ENCODE measurements at regions of chr7 and their contacts with region 1.

Region 1: DNA sequence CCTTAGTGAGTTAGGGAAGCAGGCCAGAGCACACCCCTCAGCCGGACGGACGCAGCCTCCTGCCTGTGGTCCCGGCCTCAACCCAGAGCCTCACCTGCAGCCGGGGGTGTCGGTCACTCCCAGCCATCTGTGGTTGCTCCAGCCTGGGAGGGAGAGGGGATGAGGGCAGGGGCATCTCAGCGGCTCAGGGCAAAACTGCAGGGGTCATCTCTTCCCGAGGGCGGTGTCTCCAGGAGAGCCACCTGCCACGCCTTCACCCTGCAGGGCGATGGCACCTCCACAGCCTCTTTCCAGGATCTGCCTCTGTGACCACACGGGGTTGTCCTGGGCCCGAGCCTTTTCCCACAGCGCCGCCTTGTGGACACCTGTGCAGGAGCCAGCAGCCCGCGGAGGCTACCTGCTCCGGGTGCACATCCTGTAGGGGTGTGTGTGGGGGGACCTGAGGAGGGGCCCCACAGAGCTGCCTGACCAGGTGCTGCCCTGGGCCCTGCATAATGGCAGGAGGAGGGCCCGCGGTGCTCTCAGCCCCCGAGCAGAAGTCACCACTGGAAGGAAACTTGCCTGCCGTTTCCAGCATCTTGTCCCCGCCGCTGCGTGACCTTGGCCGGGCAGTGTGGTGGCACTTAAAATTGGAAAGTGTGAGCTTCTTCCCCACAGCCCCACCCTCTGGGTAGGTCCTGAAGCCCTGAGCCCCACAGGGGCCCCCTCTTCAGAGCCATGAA is 21.6 kb upstream of the AP5Z1 start:
- DNase-seq: peak; percentile 73
- H3K4me3 Mint-ChIP-seq: no peak overlapping the region
- H3K27ac Mint-ChIP-seq: no peak overlapping the region
- H3K4me1 Mint-ChIP-seq: no peaks in the 10 kb centered on the region
- H3K27me3 Mint-ChIP-seq: no peaks in the 10 kb centered on the region
- CTCF ChIP-seq: peak; percentile 95

Region 2: GRCh38 chr7:4610768-4611467 is 143.0 kb before region 1 on chr7:
- CTCF ChIA-PET with region 1: interaction called, 5 read pairs
- POLR2A ChIA-PET with region 1: no interaction called
- intact Hi-C with region 1: loop called (anchors 1 kb)
- DNase-seq: peak; percentile 78
- H3K4me3 Mint-ChIP-seq: no peak overlapping the region
- H3K27ac Mint-ChIP-seq: no peak overlapping the region
- H3K4me1 Mint-ChIP-seq: peaks cover 6% of the 10 kb centered on the region
- H3K27me3 Mint-ChIP-seq: no peaks in the 10 kb centered on the region
- CTCF ChIP-seq: peak; percentile 81

Region 3: GRCh38 chr7:4621401-4622145 is 132.3 kb before region 1 on chr7:
- CTCF ChIA-PET with region 1: no interaction called
- POLR2A ChIA-PET with region 1: no interaction called
- intact Hi-C with region 1: no loop called
- DNase-seq: no peak
- H3K4me3 Mint-ChIP-seq: no peak overlapping the region
- H3K27ac Mint-ChIP-seq: no peak overlapping the region
- H3K4me1 Mint-ChIP-seq: no peaks in the 10 kb centered on the region
- H3K27me3 Mint-ChIP-seq: no peaks in the 10 kb centered on the region
- CTCF ChIP-seq: no peak

Region 4: GRCh38 chr7:4681886-4682620 is 71.8 kb before region 1 on chr7 and contains the start of gene FOXK1:
- CTCF ChIA-PET with region 1: interaction called, 7 read pairs
- POLR2A ChIA-PET with region 1: interaction called, 3 read pairs
- intact Hi-C with region 1: loop called (anchors 1 kb)
- DNase-seq: peak; percentile 64
- H3K4me3 Mint-ChIP-seq: peak within 1 kb of the TSS; percentile 83
- H3K27ac Mint-ChIP-seq: peak within 1 kb of the TSS; percentile 96
- H3K4me1 Mint-ChIP-seq: peaks cover 19% of the 10 kb centered on the region
- H3K27me3 Mint-ChIP-seq: no peaks in the 10 kb centered on the region
- CTCF ChIP-seq: no peak
- total RNA-seq, gene FOXK1: 37.7 and 43.8 TPM in 2 replicates